ENCODE measurements at regions of chrX and their contacts with region 1.

Region 1: GRCh38 chrX:46978341-46979291 is 66.4 kb downstream of the JADE3 start:
- DNase-seq: peak; percentile 57 to 79 (median 59)
- ATAC-seq: peak; percentile 95
- H3K4me3 ChIP-seq: no peak overlapping the region
- H3K27ac ChIP-seq: no peak overlapping the region
- H3K4me1 ChIP-seq: no peaks in the 10 kb centered on the region; a peak in 1 of 5 replicates
- H3K27me3 ChIP-seq: no peaks in the 10 kb centered on the region
- CTCF ChIP-seq: peak; percentile 63 to 80 (median 74)
- EP300 ChIP-seq: no peak
- POLR2A ChIP-seq: no peak
- RAD21 ChIP-seq: peak; percentile 29 to 58

Region 2: DNA sequence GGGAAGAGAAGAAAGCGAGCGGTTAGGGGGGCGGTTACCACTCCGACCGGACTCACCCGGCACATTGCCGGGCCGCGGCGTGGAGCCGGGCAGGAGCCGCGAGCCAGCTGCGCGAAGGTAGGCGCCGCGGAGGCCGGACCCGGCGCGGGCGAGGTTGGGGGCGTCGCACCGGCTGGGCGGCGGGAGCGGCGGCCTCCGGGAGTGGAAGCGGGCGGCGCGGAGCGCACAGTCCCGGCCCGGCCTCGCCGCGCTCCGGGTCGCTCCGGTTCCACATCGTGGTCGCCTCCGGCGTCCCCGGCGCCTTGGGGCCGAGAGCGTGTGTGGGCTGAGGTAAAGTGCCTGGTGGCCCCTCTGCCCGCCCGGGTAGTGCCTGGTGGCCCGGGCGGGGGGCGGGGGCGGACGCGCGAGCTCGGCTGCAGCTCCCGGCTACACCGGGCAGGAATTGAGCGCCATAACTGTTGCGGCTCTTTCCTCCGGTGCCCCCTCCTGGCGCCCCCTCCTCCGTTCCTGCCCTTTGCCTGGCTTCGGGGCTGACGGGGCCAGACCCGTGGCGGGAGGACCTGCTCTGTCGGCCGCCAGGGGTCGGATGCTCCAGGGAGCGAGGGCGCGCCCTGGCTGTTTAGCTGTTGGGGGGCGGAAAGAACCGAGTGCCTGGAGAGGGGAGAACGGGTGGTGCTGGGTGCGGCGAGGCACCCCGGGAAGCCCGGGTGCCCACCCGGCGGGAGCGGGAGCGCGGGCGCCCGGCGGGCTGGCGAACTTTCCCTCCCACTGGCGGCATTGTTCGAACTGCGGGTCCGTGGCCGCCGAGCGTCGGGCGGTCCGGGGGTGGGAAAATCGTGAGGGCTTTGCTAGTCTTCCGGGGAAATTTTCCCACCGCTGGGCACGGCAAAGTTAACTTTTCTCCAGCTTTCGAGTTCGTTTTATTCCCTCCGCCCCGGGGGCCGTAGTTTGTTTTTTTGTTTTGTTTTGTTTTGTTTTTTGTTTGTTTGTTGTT is 65.7 kb before region 1 on chrX:
- CTCF ChIA-PET with region 1: no interaction called
- POLR2A ChIA-PET with region 1: no interaction called
- in situ Hi-C with region 1: no loop called
- intact Hi-C with region 1: loop called (anchors 1 kb)
- DNase-seq: peak; percentile 18 to 52 (median 34)
- ATAC-seq: peak; percentile 85
- H3K4me3 ChIP-seq: peak overlapping the region; percentile 50
- H3K27ac ChIP-seq: peak overlapping the region; percentile 49; the same call in 1 of the 3 replicates
- H3K4me1 ChIP-seq: peaks cover 0 to 9% of the 10 kb centered on the region in 2 experiments; a peak in 2 of 5 replicates
- H3K27me3 ChIP-seq: no peaks in the 10 kb centered on the region; a peak in 2 of 5 replicates
- CTCF ChIP-seq: peak; percentile 39 to 56 (median 50); a peak in 5 of 6 replicates
- EP300 ChIP-seq: no peak
- POLR2A ChIP-seq: no peak
- RAD21 ChIP-seq: peak in 1 of 2 experiments; percentile 24; a peak in 1 of 4 replicates

Region 3: GRCh38 chrX:47012131-47012530 is 33.5 kb after region 1 on chrX:
- CTCF ChIA-PET with region 1: no interaction called
- POLR2A ChIA-PET with region 1: no interaction called
- in situ Hi-C with region 1: no loop called
- intact Hi-C with region 1: no loop called
- DNase-seq: no peak
- ATAC-seq: no peak
- H3K4me3 ChIP-seq: no peak overlapping the region
- H3K27ac ChIP-seq: no peak overlapping the region
- H3K4me1 ChIP-seq: no peaks in the 10 kb centered on the region
- H3K27me3 ChIP-seq: no peaks in the 10 kb centered on the region
- CTCF ChIP-seq: no peak
- EP300 ChIP-seq: no peak
- POLR2A ChIP-seq: no peak
- RAD21 ChIP-seq: no peak